Activated CD4-positive, alpha-beta memory T cell treated with anti-CD3 and anti-CD28 coated beads, Interleukin-2, amount 10 ng/mL, durations not matched to agents 7 days and 5 days (primary cell): ENCODE measurements at regions of chr15 and their contacts with region 1.

Region 1: DNA sequence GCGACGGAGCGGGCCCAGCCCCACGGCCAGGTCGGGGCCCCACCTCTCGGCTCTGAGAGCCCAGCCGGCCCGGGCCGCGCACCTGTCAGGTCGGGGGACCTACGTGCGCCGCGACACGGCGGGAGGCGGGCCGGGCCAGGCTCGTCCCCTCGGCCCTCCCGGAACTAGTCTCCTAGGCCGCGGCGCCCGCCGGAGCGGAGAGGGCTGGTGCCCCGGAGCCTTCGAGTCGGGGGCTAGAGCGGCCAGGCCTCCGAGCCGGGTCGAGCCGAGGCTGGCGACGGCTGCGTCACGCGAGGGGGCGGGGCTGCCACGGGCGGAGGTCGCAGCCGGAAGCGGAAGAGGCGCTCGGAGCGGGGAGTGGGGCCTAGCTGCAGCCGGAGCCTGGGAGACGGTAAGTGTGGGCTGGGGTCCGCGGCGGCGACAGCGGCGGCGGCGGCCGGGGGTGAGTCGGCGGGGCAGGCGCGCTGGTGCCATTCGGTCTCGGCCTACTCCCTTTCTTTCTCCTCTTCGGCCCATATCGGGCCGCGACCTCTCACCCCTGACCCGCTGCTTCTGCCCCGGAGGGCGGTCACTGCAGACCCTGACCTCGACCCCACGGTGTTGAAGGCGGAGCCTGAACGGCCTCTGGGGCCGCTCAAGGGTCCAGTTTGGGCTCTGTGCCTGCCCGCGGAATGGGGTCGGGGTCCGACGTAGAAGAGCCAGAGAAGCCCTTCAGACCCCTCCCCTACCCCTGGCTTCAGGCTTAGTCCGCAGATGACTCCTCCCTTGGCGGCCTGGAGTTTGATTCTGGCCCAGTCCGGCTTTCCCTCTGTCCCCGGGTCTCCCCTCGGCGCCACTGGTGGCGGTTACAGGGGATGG is at the start of gene CLK3:
- DNase-seq: peak; percentile 97
- H3K4me3 Mint-ChIP-seq: peak within 1 kb of the TSS; percentile 96
- H3K27ac Mint-ChIP-seq: peak within 1 kb of the TSS; percentile 97
- H3K4me1 Mint-ChIP-seq: peaks cover 48% of the 10 kb centered on the region
- H3K27me3 Mint-ChIP-seq: no peaks in the 10 kb centered on the region
- total RNA-seq, gene CLK3: 133 to 136 TPM

Region 2: DNA sequence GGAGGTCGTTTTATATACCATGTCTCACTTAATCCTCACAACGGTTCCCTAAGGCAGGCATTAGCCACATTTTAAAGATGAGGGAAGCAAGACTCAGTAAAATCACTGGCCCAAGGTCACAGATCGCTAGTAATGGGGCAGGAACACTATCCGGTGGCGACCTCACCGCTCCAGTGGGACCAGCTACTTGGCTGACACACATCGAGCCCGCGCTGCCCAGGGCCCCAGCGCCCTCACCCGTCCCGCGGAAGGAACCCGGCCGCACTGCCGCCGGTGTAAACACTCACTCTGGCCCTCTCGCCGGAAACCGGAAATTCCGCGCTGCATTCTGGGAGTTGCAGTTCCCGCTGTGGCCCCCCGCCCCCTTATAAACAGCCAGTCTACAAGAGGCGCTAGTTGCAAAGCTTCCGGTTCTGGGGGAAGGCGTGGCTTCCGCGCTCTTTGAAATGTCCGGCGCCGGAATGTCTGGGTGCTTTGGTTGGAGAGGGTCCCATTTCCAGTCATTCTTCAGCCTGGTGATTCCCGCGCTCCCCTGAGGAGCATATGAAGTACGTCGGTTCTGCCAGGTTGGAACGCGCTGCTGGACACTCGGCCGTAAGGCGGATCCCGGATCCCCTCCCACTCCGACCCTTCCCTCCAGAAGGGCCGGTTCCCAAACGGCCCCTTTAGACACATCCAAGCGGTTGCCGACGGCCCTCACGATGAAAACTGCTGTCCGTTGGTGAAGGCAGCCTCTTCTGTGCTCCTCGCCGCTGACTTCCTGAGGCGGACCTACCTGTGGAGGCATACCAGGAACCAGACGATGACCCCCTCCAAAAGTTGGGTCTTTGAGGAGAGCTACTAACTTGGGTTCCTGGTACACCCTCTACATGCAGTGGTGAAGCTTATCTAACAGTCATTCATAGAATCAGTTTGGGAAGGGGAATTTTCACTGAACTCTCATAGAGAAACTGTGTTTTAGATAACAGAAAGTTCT is 154.6 kb before region 1 on chr15 and contains the start of gene UBL7:
- CTCF ChIA-PET with region 1: no interaction called
- POLR2A ChIA-PET with region 1: interaction called, 10 read pairs
- DNase-seq: peak; percentile 99
- H3K4me3 Mint-ChIP-seq: peak within 1 kb of the TSS; percentile 93
- H3K27ac Mint-ChIP-seq: peak within 1 kb of the TSS; percentile 80
- H3K4me1 Mint-ChIP-seq: peaks cover 50% of the 10 kb centered on the region
- H3K27me3 Mint-ChIP-seq: no peaks in the 10 kb centered on the region
- total RNA-seq, gene UBL7: 54.7 to 61.3 TPM

Region 3: DNA sequence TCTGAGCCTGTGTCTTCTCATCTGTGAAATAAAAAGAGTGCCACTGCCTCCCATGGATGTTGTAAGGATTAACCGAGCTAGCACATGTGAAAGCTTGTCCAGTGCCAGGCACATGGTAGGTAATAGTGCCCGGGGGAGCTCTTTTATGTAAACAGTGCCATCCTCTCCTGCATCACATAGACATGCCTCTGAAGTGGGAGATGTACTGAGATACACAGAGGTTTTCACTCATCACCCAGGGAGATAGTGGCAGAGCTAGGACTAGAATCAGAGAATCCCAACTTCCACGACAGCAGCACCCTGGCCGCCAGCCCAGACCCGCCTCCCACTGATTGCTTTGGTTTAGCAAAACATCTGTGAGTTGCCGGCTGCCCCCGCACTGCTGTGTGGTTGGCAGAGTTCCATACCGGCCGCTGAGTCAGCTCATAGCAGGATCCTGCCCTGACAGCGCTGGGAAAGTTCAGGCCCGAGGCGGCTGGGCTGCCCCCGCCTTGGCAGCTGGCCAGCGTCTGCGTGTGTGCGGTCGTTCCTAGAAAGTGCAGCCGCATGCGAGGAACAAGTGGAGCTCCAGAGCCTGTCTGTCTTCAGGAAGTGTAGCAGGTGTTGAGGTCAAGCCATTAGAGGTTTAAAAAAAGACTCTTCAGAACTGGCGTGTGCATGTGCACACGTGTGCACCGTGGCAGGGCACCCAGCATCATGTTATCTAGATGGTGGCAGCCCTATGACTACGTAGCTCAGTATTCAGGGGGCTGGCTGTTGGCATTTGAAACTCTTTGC is 69.7 kb before region 1 on chr15:
- CTCF ChIA-PET with region 1: interaction called, 6 read pairs
- POLR2A ChIA-PET with region 1: interaction called, 86 read pairs
- DNase-seq: peak; percentile 89
- H3K4me3 Mint-ChIP-seq: peak overlapping the region; percentile 60
- H3K27ac Mint-ChIP-seq: peak overlapping the region; percentile 79
- H3K4me1 Mint-ChIP-seq: peaks cover 82% of the 10 kb centered on the region
- H3K27me3 Mint-ChIP-seq: no peaks in the 10 kb centered on the region

Region 4: GRCh38 chr15:74598126-74598842 is 17.5 kb before region 1 on chr15:
- CTCF ChIA-PET with region 1: no interaction called
- POLR2A ChIA-PET with region 1: interaction called, 55 read pairs
- DNase-seq: peak; percentile 92
- H3K4me3 Mint-ChIP-seq: peak overlapping the region; percentile 95
- H3K27ac Mint-ChIP-seq: peak overlapping the region; percentile 95
- H3K4me1 Mint-ChIP-seq: peaks cover 19% of the 10 kb centered on the region
- H3K27me3 Mint-ChIP-seq: no peaks in the 10 kb centered on the region

Region 5: GRCh38 chr15:74626752-74627692 is 11.3 kb after region 1 on chr15:
- CTCF ChIA-PET with region 1: interaction called, 89 read pairs
- POLR2A ChIA-PET with region 1: interaction called, 31 read pairs
- DNase-seq: no peak
- H3K4me3 Mint-ChIP-seq: no peak overlapping the region
- H3K27ac Mint-ChIP-seq: peak overlapping the region; percentile 73
- H3K4me1 Mint-ChIP-seq: peaks cover 36% of the 10 kb centered on the region
- H3K27me3 Mint-ChIP-seq: no peaks in the 10 kb centered on the region

Region 6: DNA sequence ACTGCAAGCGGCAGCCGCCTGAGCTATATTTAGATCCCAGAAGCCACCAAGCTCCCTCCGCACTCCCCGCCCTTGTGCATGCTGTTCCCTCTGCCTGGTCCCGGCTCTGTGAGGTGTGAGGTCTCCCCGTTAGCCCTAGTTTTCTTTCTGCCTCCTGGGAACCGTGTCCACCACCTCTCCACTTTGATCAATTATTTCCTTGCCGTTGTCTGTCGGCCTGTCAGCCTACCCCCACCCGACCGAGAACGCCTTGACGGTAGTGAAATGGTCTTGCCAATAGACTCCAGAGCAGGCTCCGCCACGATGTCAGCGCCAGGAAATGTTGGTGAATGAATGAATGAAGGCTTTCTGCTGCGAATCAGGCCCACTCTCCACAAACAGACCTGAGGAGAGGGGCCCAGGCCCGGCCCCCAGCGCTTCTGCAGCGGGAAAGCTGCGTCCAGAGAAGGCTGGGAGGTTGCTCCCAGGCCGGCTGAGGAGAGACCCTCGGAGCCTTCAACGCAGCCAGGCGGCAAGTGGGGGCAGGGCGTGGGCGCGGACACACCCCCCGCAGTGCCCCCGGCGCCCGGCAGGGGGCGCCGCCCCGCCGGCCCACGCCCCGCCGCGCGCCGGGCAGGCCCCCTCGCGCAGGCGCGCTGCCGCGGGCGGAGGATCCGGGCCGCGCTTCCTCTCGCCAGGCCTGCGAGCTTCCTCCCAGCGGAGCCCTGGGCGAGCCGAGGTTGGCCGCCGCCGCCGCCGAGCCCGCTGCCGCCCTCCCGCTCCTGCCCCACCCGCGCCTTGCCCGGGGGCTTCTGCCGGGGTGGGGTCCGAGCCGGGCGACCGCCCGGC is 165.9 kb after region 1 on chr15 and contains the start of gene CSK:
- CTCF ChIA-PET with region 1: interaction called, 5 read pairs
- POLR2A ChIA-PET with region 1: interaction called, 27 read pairs
- DNase-seq: peak; percentile 83
- H3K4me3 Mint-ChIP-seq: peak within 1 kb of the TSS; percentile 91
- H3K27ac Mint-ChIP-seq: peak within 1 kb of the TSS; percentile 100
- H3K4me1 Mint-ChIP-seq: peaks cover 60% of the 10 kb centered on the region
- H3K27me3 Mint-ChIP-seq: no peaks in the 10 kb centered on the region
- total RNA-seq, gene CSK: 330 to 341 TPM